Motor neuron (in vitro differentiated cells): ENCODE measurements at regions of chrX and their contacts with region 1.

Region 1: DNA sequence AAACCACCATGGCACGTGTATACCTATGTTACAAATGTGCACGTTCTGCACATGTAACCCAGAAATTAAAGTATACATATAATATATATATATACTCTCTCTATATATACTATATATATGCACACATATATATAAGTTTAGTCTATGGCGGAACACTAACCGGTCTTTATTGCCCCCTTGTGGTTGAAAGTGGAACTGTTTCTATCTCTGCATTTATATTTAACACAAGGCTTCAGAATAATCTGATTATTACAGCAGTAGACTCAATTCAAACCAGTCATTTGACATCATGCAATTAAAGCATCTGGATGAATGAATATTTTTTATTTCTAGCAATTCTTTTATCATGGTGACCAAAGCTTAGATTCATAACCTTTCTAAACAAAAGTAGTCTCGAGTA is 14.6 kb downstream of the RAB9B start:
- ATAC-seq: peak in 2 of 8 experiments; percentile 29 to 42
- H3K4me3 ChIP-seq: no peak overlapping the region
- H3K27ac ChIP-seq: no peak overlapping the region
- H3K4me1 ChIP-seq: peaks cover 0 to 4% of the 10 kb centered on the region in 2 donors

Region 2: DNA sequence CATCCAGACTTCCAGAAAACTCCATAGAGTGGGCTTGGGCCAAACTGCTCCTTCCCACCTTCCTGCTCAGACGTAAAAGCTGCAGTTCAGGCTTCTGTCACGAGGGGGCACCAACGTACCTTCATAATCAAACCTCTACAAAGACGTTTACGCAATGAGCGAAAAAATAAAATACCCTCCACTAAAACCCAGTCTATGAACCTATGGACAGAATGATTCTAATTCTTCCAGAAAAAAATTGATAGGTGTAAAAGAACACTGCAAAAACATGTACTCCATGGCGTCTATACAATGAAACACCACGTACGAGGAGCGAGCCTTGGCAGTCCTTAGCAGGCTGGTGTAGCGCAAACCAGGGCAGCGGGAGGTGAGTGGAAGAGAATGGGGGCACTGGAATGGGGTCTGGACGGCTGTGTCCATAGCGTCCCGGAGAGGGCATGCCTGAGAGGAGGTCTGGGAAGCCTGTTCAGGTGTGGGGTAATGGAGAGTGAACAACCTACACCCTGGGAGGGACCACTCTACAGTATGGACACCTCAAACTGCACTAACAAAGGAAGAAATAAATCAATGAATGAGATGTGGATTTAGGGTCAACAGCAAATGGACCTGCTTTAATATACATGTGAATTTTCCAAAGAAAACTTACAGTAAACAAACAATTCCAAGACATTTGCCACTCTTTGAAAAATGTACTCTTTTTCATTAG is 283.8 kb before region 1 on chrX:
- in situ Hi-C with region 1: loop called in 4 of 9 experiments (anchors 25 kb)
- ATAC-seq: peak; percentile 57 to 88 (median 78)
- H3K4me3 ChIP-seq: peak overlapping the region; percentile 17 to 35 (median 31)
- H3K27ac ChIP-seq: peak overlapping the region in 1 of 2 donors; percentile 12
- H3K4me1 ChIP-seq: no peaks in the 10 kb centered on the region

Region 3: GRCh38 chrX:103697687-103698086 is 119.8 kb before region 1 on chrX:
- in situ Hi-C with region 1: no loop called
- ATAC-seq: no peak
- H3K4me3 ChIP-seq: no peak overlapping the region
- H3K27ac ChIP-seq: no peak overlapping the region
- H3K4me1 ChIP-seq: peaks cover 0 to 5% of the 10 kb centered on the region in 2 donors